Activated T-helper 1 cell treated with anti-CD3 and anti-CD28 coated beads, Interleukin-12 subunit alpha, Interleukin-12 subunit beta, Interleukin-2, Interleukin-4 antibody, amounts not matched to agents 30 ng/mL and 10 ng/mL and 1 ng/mL, durations not matched to agents 14 hours and 24 hours and 36 hours (primary cell): ENCODE measurements at regions of chr14 and their contacts with region 1.

Region 1: GRCh38 chr14:105086833-105087307 is 21.6 kb upstream of the GPR132 start:
- DNase-seq: peak; percentile 71
- H3K4me3 Mint-ChIP-seq: peak overlapping the region; percentile 75
- H3K27ac Mint-ChIP-seq: peak overlapping the region; percentile 34
- H3K4me1 Mint-ChIP-seq: no peaks in the 10 kb centered on the region
- H3K27me3 Mint-ChIP-seq: peaks cover 15% of the 10 kb centered on the region

Region 2: DNA sequence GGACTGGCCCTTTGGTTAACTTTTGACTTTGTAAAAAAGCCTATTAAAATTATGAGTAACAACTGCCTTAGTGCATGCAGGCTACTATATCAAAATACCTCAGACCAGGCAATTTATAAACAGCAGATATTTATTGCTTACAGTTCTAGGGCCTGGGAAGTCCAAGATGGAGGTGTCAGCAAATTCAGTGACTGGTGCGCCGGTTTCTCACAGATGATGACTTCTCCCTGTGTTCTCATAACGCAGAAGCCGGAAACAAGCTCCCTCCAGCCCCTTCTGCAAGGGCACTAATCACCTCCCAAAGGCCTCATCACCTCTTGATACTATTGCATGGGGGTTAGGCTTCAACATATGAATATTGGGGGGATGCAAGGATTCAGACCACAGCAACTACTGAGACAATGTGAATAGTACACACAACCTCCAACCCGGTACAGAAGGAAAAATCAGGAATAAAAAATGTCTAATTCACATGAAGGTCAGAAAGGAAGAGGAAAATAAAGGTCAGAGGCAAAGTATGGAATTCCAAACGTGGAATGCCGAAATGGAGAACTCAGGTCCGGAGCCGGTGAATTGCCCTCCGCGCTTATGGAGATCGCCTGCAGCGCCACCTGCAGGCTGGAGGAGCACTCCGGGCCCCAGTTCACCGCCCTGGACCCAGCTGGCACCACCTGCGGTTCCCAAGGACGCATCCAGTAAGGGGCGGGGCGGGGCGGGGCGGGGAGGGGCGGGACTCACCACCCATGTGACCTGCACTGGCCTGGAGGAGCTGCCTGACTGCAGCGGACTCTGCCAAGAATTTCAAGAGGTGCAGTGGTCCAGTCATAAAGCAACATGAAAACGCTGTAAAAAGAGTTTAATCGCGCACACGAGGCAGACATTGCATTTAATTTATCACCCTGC is 745.1 kb before region 1 on chr14:
- intact Hi-C with region 1: no loop called
- DNase-seq: no peak
- H3K4me3 Mint-ChIP-seq: no peak overlapping the region
- H3K27ac Mint-ChIP-seq: no peak overlapping the region
- H3K4me1 Mint-ChIP-seq: no peaks in the 10 kb centered on the region
- H3K27me3 Mint-ChIP-seq: peaks cover 3% of the 10 kb centered on the region

Region 3: GRCh38 chr14:105020815-105021655 is 65.8 kb before region 1 on chr14 and contains the start of gene CDCA4:
- intact Hi-C with region 1: loop called (anchors 2 kb)
- DNase-seq: peak; percentile 97
- H3K4me3 Mint-ChIP-seq: peak within 1 kb of the TSS; percentile 99
- H3K27ac Mint-ChIP-seq: peak within 1 kb of the TSS; percentile 86
- H3K4me1 Mint-ChIP-seq: peaks cover 72% of the 10 kb centered on the region
- H3K27me3 Mint-ChIP-seq: no peaks in the 10 kb centered on the region
- total RNA-seq, gene CDCA4: 62.5 and 63.7 TPM in 2 replicates

Region 4: DNA sequence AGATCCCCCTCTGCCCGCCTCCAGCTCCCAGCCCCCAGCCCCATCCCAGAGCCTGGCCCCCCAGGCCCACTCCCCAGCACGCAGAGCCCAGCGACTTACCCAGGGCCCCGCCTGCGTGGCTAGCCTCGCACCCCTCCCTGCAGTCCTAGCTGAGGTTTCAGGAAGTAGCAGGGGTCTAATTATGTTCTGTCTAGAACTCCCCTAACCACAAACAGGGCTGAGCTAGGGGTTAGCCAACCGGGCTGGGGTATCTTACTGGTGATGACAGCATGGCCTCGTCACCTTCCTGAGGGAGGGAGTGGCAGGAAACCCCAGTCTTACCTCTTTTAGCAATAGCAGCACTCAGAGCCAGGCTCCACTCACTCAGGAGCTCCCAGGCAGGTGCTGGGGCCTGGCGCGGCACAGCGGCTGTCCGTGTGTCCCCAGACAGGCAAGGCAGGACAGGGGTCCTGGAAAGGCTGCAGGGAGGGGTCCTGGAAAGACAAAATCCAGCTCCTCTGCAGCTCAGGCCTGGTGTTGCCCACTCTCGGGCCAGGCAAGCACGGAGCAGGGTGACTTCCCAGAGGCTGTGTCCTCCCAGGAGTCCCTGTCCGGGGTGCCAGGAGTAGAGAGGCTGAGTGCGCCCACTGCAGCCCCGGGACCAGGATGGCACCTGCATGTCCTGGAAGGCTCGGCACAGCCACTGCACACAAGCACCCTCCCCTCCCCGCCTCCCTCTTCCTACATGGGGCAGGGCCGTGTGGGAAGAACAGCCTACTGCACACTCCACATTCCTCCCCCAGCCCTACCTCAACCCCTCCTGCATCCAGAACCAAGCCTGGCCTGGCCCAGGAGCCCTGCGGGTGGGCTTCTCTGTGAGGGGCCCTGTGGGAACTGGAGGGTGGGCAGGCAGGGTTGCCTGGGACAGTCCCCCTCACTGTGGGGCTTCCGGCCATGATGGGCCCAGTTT is 21.3 kb before region 1 on chr14 and contains the start of gene GPR132:
- intact Hi-C with region 1: loop called (anchors 1 kb)
- DNase-seq: peak; percentile 89
- H3K4me3 Mint-ChIP-seq: peak within 1 kb of the TSS; percentile 89
- H3K27ac Mint-ChIP-seq: peak within 1 kb of the TSS; percentile 90
- H3K4me1 Mint-ChIP-seq: peaks cover 62% of the 10 kb centered on the region
- H3K27me3 Mint-ChIP-seq: no peaks in the 10 kb centered on the region
- total RNA-seq, gene GPR132: 24.6 and 24.9 TPM in 2 replicates

Region 5: GRCh38 chr14:105187935-105188524 is 101.2 kb after region 1 on chr14:
- intact Hi-C with region 1: loop called (anchors 5 kb)
- DNase-seq: no peak
- H3K4me3 Mint-ChIP-seq: no peak overlapping the region
- H3K27ac Mint-ChIP-seq: no peak overlapping the region
- H3K4me1 Mint-ChIP-seq: no peaks in the 10 kb centered on the region
- H3K27me3 Mint-ChIP-seq: peaks cover 22% of the 10 kb centered on the region

Region 6: DNA sequence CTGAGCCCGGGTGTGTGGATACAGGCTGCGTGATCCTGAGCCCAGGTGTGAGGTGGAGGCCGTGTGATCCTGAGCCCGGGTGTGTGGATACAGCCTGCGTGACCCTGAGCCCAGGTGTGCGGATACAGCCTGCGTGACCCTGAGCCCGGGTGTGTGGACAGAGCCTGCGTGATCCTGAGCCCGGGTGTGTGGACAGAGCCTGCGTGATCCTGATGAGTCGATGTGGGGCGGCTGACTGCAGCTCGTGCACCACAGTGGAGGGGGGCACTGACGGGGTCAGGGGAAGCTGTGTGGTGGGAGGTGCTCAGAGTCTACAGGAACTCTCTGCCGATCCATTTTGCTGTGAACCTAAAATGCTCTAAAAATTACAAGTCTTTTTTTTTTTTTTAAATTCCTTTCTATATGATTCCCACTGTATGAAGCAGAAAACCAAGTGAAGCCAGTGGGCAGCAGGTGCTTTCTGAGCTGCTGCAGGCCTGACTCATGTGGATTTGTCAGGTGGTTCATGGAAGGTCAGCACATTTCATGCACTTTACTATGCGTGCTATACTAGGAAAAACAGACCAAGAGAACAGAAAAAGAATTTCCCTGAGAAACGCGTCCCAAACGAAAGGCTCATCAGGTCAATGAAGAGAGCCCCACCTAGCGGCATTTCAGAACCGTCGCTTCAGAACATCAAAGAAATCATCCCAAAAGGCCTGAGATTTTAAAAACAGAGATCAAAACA is 194.7 kb after region 1 on chr14:
- intact Hi-C with region 1: loop called (anchors 1 kb)
- DNase-seq: no peak
- H3K4me3 Mint-ChIP-seq: no peak overlapping the region
- H3K27ac Mint-ChIP-seq: no peak overlapping the region
- H3K4me1 Mint-ChIP-seq: peaks cover 31% of the 10 kb centered on the region
- H3K27me3 Mint-ChIP-seq: no peaks in the 10 kb centered on the region

Region 7: GRCh38 chr14:105351920-105352851 is 265.3 kb after region 1 on chr14:
- intact Hi-C with region 1: loop called (anchors 1 kb)
- DNase-seq: peak; percentile 82
- H3K4me3 Mint-ChIP-seq: no peak overlapping the region
- H3K27ac Mint-ChIP-seq: no peak overlapping the region
- H3K4me1 Mint-ChIP-seq: peaks cover 4% of the 10 kb centered on the region
- H3K27me3 Mint-ChIP-seq: no peaks in the 10 kb centered on the region

Region 8: DNA sequence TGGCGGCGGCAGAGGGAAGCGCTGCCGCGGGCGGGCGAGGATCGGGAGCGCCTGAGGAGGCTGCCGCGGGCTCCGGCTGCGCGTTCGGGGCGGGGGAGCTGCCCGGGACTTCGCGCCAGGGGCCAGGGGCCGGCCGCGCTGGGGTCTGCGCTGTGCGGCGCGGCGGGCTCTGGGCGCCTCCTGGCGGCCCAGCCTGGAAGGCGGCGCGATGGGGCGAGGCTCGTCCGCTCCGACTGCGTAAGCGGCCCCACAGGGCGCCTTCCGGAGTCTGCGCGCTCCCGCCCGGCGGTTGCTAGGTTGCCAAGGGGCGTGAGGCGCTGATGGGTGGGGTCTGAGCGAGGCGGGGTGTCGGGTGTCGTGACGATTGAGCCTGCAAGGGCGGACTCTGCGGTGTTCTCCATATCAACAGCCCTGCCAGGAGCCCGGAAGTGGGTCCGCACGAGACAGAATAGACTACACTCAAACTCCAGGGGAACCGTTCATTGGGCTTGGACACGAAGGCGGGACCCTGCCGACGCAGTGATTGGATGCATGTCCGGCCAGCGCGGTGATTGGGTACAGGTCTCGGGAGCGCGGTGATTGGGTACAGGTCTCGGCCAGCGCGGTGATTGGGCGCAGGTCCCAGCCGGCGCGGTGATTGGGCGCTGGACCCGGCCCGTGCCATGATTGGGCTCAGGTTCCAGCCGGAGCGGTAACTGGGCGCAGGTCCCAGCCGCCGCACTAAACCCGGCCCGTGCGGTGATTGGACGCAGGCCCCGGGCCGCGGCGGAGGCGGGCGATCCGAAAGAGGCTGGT is 403.9 kb after region 1 on chr14 and contains the start of gene TEDC1:
- intact Hi-C with region 1: loop called (anchors 5 kb)
- DNase-seq: peak; percentile 99
- H3K4me3 Mint-ChIP-seq: peak within 1 kb of the TSS; percentile 87
- H3K27ac Mint-ChIP-seq: peak within 1 kb of the TSS; percentile 90
- H3K4me1 Mint-ChIP-seq: peaks cover 10% of the 10 kb centered on the region
- H3K27me3 Mint-ChIP-seq: no peaks in the 10 kb centered on the region
- total RNA-seq, gene TEDC1: 44.5 and 46.1 TPM in 2 replicates